Dendritic cell treated with granulocyte-macrophage colony-stimulating factor and Interleukin-4, amounts not matched to agents 40 ng/mL and 50 ng/mL, for 4 days (primary cell): ENCODE measurements at regions of chr1 and their contacts with region 1.

Region 1: DNA sequence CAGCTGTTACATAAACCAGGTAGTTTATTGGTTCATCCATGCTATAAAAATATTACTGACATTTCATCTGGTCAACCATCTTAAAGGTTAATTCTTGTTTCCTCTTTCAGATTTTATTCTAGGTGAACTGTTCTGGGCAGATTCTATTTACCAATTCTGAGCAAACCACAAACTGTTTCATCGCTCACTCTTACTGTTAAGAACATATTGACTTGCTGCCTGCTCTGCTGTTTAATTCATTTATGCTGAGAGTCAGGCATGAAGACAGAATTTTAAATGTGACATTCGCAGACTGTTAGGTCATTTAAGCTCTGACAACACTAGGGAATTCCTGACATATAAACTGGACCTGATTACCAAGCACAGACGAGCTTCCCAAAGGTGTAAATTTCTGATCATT is 98.3 kb downstream of the PIGK start:
- H3K4me3 Mint-ChIP-seq: no peak overlapping the region
- H3K27ac Mint-ChIP-seq: no peak overlapping the region
- H3K4me1 Mint-ChIP-seq: peaks cover 4% of the 10 kb centered on the region
- H3K27me3 Mint-ChIP-seq: no peaks in the 10 kb centered on the region

Region 2: GRCh38 chr1:76901158-76901767 is 219.7 kb before region 1 on chr1:
- intact Hi-C with region 1: loop called (anchors 5 kb)
- H3K4me3 Mint-ChIP-seq: no peak overlapping the region
- H3K27ac Mint-ChIP-seq: no peak overlapping the region
- H3K4me1 Mint-ChIP-seq: peaks cover 14% of the 10 kb centered on the region
- H3K27me3 Mint-ChIP-seq: no peaks in the 10 kb centered on the region

Region 3: DNA sequence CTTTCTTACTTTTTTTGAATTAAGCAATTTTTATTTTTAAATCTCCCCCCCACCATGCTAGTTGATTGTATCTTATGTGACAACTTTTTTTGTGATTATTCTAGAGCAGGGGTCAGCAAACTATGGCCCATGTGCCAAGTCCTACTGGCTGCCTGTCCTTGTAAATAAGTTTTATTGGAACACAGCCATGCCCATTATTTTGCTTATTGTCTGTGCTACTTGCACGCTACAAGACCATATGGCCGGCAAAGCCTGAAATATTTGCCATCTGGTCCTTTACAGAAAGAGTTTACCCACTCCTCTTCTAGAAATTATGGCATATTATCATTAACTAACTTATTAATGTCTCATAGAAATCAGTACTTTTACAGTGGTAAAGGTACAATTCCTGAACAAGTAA is 212.6 kb after region 1 on chr1:
- intact Hi-C with region 1: no loop called
- H3K4me3 Mint-ChIP-seq: no peak overlapping the region
- H3K27ac Mint-ChIP-seq: no peak overlapping the region
- H3K4me1 Mint-ChIP-seq: no peaks in the 10 kb centered on the region
- H3K27me3 Mint-ChIP-seq: no peaks in the 10 kb centered on the region